A673 (cell line): ENCODE measurements at regions of chr2 and their contacts with region 1.

Region 1: GRCh38 chr2:134926231-134926931 is 7.8 kb downstream of the CCNT2 start:
- DNase-seq: no peak
- H3K4me3 ChIP-seq: no peak overlapping the region
- H3K27ac ChIP-seq: peak overlapping the region; percentile 39
- H3K4me1 ChIP-seq: peaks cover 23% of the 10 kb centered on the region
- H3K27me3 ChIP-seq: no peaks in the 10 kb centered on the region
- CTCF ChIP-seq: no peak

Region 2: GRCh38 chr2:135851858-135852257 is 925.5 kb after region 1 on chr2:
- CTCF ChIA-PET with region 1: no interaction called
- POLR2A ChIA-PET with region 1: interaction called, 29 read pairs
- intact Hi-C with region 1: no loop called
- DNase-seq: no peak
- H3K4me3 ChIP-seq: no peak overlapping the region
- H3K27ac ChIP-seq: no peak overlapping the region
- H3K4me1 ChIP-seq: no peaks in the 10 kb centered on the region
- H3K27me3 ChIP-seq: no peaks in the 10 kb centered on the region
- CTCF ChIP-seq: no peak